CD4-positive, alpha-beta memory T cell (primary cell): ENCODE measurements at regions of chr5 and their contacts with region 1.

Region 1: DNA sequence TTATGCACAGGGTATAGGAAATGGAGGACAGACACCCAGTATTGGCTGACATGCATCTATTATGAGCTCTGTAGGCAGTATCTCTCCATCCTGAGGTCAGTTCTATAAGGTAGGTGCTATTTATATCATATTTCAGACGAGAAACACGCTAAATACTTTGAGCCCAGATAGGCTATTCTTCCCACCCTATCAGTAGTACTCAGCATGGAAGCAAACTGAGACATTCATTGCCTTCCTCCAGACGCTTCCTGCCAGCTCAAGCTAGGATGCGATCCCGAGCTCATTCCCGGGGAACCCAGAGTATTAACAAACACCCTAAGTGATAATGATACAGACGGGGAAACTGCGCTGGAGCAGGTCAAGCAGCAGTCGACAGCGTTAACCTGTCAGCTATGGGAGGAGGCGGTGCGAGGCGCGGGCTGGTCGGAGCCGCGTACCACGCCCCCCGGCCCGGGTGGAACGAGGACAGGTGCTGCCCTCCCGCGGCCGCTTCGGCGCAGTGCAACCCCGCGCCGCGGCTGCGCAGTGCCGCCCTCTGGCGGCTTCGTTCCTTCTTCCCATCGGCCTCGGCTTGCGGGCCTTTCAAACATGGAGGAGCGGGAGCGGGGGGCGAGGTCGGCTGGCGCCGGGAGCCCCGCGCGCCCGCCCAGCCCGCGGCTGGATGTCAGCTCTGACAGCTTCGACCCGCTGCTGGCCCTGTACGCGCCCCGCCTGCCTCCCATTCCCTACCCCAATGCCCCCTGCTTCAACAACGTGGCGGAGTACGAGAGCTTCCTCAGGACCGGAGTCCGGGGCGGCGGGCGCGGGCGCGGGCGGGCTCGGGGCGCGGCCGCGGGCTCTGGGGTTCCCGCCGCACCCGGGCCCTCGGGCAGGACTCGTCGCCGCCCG is at the start of gene LSM11:
- DNase-seq: peak; percentile 85 to 94 (median 88)
- H3K4me3 ChIP-seq: peak within 1 kb of the TSS; percentile 50 to 63
- H3K4me3 Mint-ChIP-seq: peak within 1 kb of the TSS; percentile 93 to 98 (median 96)
- H3K27ac ChIP-seq: peak within 1 kb of the TSS; percentile 45
- H3K27ac Mint-ChIP-seq: peak within 1 kb of the TSS; percentile 62 to 96 (median 94)
- H3K4me1 ChIP-seq: peaks cover 18% of the 10 kb centered on the region
- H3K4me1 Mint-ChIP-seq: peaks cover 19 to 34% (median 28%) of the 10 kb centered on the region in 4 donors
- H3K27me3 ChIP-seq: no peaks in the 10 kb centered on the region
- H3K27me3 Mint-ChIP-seq: no peaks in the 10 kb centered on the region
- total RNA-seq, gene LSM11: 4.4 to 4.8 TPM

Region 2: DNA sequence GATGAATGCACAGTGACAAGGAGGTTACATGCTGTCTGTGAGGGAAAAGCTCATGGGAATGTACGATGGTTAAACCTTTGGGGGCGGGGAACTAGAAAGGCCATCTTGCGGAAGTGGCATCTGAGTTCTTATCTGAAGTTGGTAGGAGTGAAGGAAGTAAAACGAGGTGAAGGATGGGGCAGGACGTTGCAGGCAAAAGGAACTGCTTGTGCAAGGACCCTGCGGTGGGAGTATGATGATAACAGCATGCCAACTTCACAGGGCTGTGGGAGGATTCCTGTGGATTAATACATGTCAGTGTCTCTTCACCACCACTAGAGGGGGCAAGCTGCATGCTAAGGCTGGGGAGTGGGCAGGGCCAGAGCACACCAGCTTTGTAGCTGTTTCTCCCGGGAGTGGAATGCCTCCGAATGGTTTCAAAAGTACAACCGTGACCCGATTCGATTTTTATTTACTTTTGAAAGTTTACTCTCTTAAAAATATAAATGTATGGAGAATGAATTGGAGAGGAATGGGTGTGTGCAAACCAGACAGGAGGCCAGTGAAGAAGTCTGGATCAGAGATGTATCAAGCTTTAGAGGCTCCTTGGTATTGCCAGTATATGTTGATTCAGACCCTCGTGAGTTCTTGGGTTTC is 415.0 kb before region 1 on chr5:
- CTCF ChIA-PET with region 1: interaction called, 20 read pairs
- POLR2A ChIA-PET with region 1: interaction called, 3 read pairs
- intact Hi-C with region 1: loop called (anchors 1 kb)
- DNase-seq: peak; percentile 66 to 69 (median 67)
- H3K4me3 ChIP-seq: no peak overlapping the region
- H3K4me3 Mint-ChIP-seq: peak overlapping the region; percentile 3 to 69 (median 58)
- H3K27ac ChIP-seq: peak overlapping the region; percentile 30
- H3K27ac Mint-ChIP-seq: peak overlapping the region; percentile 72 to 96 (median 89)
- H3K4me1 ChIP-seq: peaks cover 27% of the 10 kb centered on the region
- H3K4me1 Mint-ChIP-seq: peaks cover 23 to 44% (median 26%) of the 10 kb centered on the region in 4 donors
- H3K27me3 ChIP-seq: no peaks in the 10 kb centered on the region
- H3K27me3 Mint-ChIP-seq: no peaks in the 10 kb centered on the region

Region 3: DNA sequence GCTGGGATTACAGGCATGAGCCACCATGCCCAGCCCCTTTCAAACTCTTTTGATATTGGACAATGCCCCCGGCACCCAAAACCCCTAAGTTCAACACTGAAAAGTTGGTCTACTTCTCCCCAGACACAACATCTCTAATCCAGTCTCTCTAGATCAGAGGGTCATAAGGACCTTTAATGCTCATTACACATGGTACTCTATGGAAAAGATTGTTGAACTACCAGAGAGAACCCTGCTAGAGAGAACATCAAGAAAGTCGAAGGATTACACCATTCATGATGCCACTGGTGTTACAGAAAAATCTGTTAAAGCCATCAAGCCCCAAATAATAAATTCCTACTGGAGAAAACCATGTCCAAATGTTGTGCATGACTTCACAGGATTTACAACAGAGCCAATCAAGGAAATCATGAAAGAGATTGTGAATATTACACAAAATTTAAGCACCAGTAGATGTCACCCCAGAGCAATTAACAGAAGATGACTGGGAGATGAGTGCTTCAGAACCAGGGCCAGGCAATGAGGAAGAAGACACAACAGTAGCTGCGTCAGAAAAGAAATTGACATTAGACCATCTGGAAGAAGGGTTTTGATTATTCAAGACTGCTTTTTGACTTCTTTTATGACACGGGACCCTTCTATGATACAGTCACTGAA is 311.7 kb before region 1 on chr5:
- CTCF ChIA-PET with region 1: interaction called, 101 read pairs
- POLR2A ChIA-PET with region 1: interaction called, 9 read pairs
- intact Hi-C with region 1: loop called (anchors 1 kb)
- DNase-seq: peak; percentile 49 to 63 (median 59)
- H3K4me3 ChIP-seq: no peak overlapping the region
- H3K4me3 Mint-ChIP-seq: peak overlapping the region in 4 of 8 donors; percentile 17 to 65 (median 42)
- H3K27ac ChIP-seq: no peak overlapping the region
- H3K27ac Mint-ChIP-seq: peak overlapping the region in 6 of 7 donors; percentile 3 to 83 (median 77)
- H3K4me1 ChIP-seq: peaks cover 4% of the 10 kb centered on the region
- H3K4me1 Mint-ChIP-seq: peaks cover 5 to 7% (median 5%) of the 10 kb centered on the region in 4 donors
- H3K27me3 ChIP-seq: no peaks in the 10 kb centered on the region
- H3K27me3 Mint-ChIP-seq: no peaks in the 10 kb centered on the region

Region 4: DNA sequence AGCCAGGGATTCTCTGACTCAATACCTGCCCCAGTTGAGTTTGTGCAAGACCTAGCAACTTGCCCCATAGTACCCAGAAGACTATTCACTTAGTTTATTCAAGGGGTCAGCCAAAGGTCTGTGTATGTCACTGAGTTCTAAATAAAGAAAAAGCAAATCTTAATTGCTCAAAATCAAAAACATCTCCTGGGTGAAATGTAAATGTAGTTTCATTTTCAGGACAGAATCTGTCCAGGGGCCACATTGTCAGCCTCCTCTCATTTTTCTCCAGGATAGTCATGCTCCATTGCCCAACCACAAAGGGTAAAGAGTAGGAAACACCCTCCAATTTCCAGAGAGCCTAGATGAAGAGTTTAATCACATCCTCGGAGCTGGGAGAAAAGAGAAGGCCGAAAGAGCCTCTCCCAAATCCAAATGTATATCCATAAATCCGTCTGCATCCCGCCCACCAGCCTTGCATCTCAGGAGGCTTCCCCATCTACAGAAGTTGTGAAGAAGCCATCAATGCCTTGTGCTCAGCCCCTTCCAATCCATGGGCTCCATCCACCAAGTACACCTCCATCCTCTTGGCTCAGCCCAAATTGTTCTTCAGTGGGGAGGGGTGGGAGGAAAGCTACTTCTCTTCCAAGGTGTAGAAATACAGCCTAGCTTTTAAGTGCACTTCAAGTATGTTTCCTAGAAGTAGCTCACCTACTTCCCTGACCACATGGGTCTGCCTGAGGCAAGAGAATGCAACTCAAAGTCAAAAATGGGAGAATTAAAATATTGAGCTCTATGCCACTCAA is 194.7 kb before region 1 on chr5:
- CTCF ChIA-PET with region 1: interaction called, 11 read pairs
- POLR2A ChIA-PET with region 1: no interaction called
- intact Hi-C with region 1: loop called (anchors 5 kb)
- DNase-seq: no peak
- H3K4me3 ChIP-seq: no peak overlapping the region
- H3K4me3 Mint-ChIP-seq: peak overlapping the region; percentile 31 to 91 (median 79)
- H3K27ac ChIP-seq: peak overlapping the region; percentile 44
- H3K27ac Mint-ChIP-seq: peak overlapping the region; percentile 93 to 98 (median 96)
- H3K4me1 ChIP-seq: peaks cover 100% of the 10 kb centered on the region
- H3K4me1 Mint-ChIP-seq: peaks cover 79 to 94% (median 89%) of the 10 kb centered on the region in 4 donors
- H3K27me3 ChIP-seq: no peaks in the 10 kb centered on the region
- H3K27me3 Mint-ChIP-seq: no peaks in the 10 kb centered on the region

Region 5: DNA sequence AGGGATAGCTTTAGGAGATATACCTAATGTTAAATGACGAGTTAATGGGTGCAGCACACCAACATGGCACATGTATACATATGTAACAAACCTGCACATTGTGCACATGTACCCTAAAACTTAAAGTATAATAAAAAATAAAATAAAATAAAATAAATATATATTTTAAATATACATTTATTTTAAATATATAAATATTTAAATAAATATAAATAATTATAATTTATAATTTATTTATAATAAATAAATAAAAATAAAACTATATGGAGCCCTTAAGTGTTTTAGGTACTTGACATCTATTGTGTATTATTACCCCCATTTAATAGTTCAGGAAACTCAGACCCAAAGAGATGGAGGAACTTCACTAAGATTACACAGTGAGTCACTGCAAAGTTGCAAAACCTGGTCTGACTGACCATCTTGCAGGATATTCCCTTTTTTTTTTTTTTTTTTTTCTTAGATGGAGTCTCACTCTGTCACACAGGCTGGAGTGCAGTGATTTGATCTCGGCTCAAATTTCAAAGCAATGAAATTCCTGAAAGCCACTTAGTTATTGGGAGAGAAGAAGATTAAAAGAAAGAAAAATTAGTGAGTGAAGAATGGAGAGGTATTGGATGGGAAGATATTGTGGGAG is 77.8 kb before region 1 on chr5:
- CTCF ChIA-PET with region 1: interaction called, 27 read pairs
- POLR2A ChIA-PET with region 1: interaction called, 5 read pairs
- intact Hi-C with region 1: loop called (anchors 1 kb)
- DNase-seq: no peak
- H3K4me3 ChIP-seq: no peak overlapping the region
- H3K4me3 Mint-ChIP-seq: no peak overlapping the region
- H3K27ac ChIP-seq: no peak overlapping the region
- H3K27ac Mint-ChIP-seq: no peak overlapping the region
- H3K4me1 ChIP-seq: peaks cover 6% of the 10 kb centered on the region
- H3K4me1 Mint-ChIP-seq: peaks cover 9 to 10% (median 9%) of the 10 kb centered on the region in 4 donors
- H3K27me3 ChIP-seq: no peaks in the 10 kb centered on the region
- H3K27me3 Mint-ChIP-seq: no peaks in the 10 kb centered on the region

Region 6: DNA sequence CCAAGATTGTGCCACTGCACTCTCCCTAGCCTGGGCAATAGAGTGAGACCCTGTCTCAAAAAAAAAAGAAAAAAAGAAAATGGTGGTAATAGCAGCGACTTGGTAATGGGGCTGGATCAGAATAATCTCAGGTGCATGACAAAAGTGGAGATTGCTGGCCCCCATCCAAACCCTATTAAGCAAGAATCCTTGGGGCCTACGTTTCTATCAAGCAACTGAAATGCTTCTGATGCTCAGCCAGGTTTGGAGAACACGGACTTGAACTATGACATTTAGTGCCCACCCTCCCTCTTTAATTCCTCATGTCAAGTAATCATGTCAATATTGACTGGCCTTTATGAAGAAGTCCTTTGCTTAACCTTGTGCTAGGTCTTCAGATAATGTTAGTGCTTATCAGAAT is 65.5 kb before region 1 on chr5:
- CTCF ChIA-PET with region 1: no interaction called
- POLR2A ChIA-PET with region 1: no interaction called
- intact Hi-C with region 1: no loop called
- DNase-seq: no peak
- H3K4me3 ChIP-seq: no peak overlapping the region
- H3K4me3 Mint-ChIP-seq: no peak overlapping the region
- H3K27ac ChIP-seq: no peak overlapping the region
- H3K27ac Mint-ChIP-seq: no peak overlapping the region
- H3K4me1 ChIP-seq: no peaks in the 10 kb centered on the region
- H3K4me1 Mint-ChIP-seq: no peaks in the 10 kb centered on the region
- H3K27me3 ChIP-seq: no peaks in the 10 kb centered on the region
- H3K27me3 Mint-ChIP-seq: no peaks in the 10 kb centered on the region

Region 7: DNA sequence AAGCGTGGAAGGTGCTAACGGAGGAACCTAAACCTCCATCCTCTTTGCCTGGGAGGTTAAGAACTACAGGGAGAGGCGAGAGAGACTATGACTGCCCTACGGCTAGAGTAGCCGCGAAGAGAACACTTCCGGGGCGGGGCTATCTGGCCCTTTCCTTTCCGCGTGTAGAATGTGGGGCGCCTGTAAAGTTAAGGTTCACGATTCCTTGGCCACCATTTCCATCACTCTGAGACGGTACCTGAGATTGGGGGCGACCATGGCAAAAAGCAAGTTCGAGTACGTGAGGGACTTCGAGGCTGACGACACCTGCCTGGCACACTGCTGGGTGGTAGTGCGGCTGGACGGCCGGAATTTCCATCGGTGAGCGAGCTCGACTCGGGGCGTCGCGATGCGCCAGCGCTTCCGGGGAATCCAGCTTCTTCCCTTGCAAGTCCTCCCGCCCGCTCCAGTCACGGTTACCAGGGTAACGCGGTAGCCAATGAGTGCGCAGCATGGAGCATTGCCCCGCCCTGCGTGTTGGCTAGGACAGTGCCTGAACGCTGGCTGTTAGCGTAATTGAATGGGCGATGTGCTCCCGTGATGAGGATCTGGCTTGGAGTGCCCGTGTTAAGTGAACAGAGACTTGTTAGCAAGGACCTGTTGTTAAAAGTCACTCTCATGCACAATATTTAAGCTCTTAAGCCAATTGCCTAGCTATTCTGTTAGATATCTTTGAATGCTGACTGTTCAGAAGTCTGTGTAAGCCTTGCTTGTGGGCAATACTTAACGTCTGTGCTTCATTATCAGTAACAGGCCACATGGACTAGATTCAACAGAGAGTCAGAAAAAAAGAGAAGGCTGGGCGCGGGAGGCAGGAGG is 11.9 kb before region 1 on chr5 and contains the start of gene THG1L:
- CTCF ChIA-PET with region 1: interaction called, 34 read pairs
- POLR2A ChIA-PET with region 1: interaction called, 31 read pairs
- intact Hi-C with region 1: loop called (anchors 1 kb)
- DNase-seq: peak; percentile 95 to 98 (median 96)
- H3K4me3 ChIP-seq: peak within 1 kb of the TSS; percentile 79 to 90
- H3K4me3 Mint-ChIP-seq: peak within 1 kb of the TSS; percentile 94 to 100 (median 98)
- H3K27ac ChIP-seq: peak within 1 kb of the TSS; percentile 82
- H3K27ac Mint-ChIP-seq: peak within 1 kb of the TSS; percentile 94 to 99 (median 97)
- H3K4me1 ChIP-seq: peaks cover 10% of the 10 kb centered on the region
- H3K4me1 Mint-ChIP-seq: peaks cover 11 to 24% (median 18%) of the 10 kb centered on the region in 4 donors
- H3K27me3 ChIP-seq: no peaks in the 10 kb centered on the region
- H3K27me3 Mint-ChIP-seq: no peaks in the 10 kb centered on the region
- total RNA-seq, gene THG1L: 9.1 to 10.5 TPM